Astrocyte of the cerebellum (primary cell): ENCODE measurements at regions of chr11 and their contacts with region 1.

Region 1: DNA sequence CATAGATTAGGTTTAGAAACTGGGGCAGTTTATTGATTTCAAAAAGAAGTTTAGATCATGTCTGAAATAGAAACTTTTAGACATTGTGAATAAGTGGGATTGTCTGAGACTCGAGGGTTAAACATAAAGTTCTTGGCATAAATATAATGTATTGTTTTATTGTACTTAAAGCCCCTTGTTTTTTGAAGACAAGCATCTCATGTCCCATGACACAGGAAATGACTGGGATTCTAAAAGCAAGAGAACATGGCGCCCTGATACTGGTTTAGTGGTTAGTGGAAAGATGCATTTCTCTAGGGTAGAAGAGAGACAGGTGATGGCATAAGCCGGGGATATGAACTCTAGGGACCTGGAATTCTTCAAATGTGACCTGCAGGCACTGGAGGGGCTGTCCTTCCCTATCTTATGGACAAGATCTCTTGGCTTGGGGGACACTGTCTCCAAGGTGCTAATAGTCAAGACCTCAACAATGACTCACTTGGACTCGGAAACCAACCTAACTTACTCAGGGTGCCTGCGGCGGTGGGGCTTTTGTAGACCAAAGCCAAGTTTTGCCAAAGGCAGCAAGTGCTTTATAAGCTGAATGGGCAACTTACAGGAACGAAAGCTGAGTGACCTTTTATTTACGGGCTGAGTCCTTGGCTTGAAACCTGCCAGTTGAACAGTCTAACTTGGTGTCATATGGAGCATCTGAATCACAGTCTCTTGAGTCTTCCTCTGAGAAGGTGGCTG is 48.2 kb downstream of the UBASH3B start:
- DNase-seq: no peak
- H3K4me3 ChIP-seq: no peak overlapping the region
- CTCF ChIP-seq: no peak

Region 2: DNA sequence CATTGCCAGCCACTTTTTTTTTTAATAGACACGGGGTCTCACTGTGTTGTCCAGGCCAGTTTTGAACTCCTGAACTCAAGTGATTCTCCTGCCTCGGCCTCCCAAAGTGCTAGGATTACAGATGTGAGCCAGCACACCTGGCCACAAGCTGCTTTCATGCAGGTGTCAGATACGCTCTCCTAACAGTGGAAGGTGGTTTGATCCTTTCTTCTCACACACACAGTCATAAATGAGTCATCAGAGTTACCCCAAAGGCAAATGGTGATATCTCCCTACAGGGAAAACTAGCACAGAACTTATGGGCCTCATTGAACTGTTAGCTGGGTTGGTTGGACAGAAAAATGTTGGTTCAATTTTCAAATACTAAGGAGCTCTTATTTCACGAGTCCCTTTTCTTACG is 86.4 kb before region 1 on chr11:
- in situ Hi-C with region 1: no loop called
- DNase-seq: no peak
- H3K4me3 ChIP-seq: no peak overlapping the region
- CTCF ChIP-seq: no peak

Region 3: DNA sequence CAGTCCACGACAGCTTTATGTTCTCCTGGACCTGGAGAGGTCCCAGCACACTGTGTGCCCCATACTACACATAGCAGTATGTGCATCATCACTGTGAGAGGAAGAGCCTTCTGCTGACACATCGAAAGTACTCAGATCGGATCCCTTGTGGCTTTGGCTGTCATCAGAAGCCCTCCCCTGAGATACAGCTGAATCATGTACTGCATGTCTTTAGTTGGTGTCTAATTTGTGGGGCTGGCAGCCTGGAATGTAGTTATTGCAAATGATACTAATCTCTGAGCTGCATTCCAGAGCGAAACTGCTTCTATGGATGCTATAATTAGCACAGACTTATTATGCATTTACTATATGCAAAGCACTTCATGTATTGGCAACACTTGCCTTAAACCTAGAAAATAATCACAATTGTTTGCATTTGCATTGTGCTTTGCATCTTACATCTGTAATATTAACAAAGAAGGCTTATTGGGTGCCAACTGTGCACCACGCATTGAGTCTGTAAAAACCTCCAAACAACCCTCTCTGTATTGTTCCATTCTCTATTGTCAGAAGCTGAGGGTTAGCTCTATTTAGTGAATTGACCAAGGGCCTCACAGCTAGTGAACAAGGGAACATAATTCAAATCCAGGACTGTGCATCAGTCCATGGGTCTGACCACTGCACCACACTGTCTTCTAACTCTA is 45.4 kb after region 1 on chr11:
- in situ Hi-C with region 1: loop called (anchors 5 kb)
- DNase-seq: peak; percentile 73
- H3K4me3 ChIP-seq: no peak overlapping the region
- CTCF ChIP-seq: no peak